ENCODE measurements at regions of chr2 and their contacts with region 1.

Region 1: DNA sequence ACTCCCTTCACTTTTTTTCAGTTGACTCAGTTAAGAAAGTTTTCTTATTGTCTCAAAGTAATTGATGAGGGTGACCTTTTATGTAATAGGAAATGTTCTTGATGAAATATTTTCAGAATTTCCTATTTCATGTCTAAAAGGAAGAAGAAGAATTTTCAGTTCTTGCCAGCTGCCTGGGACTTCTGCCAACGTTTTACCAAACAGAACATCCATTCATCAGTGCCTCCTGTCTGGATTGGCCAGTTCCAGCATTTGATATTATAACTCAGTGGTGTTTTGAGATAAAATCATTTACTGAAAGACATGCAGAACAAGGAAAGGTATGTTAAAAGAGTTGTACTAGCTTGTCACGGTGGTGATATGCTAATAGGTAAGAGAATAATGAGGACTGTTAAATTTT is 104.7 kb upstream of the MYO3B start:
- DNase-seq: peak; percentile 96
- H3K4me3 ChIP-seq: no peak overlapping the region
- H3K27ac ChIP-seq: no peak overlapping the region
- H3K4me1 ChIP-seq: peaks cover 14% of the 10 kb centered on the region
- H3K27me3 ChIP-seq: no peaks in the 10 kb centered on the region
- CTCF ChIP-seq: no peak
- POLR2A ChIP-seq: no peak

Region 2: GRCh38 chr2:169961911-169962310 is 111.4 kb before region 1 on chr2:
- CTCF ChIA-PET with region 1: no interaction called
- POLR2A ChIA-PET with region 1: no interaction called
- dilution Hi-C with region 1: no loop called
- intact Hi-C with region 1: loop called (anchors 5 kb)
- DNase-seq: no peak
- H3K4me3 ChIP-seq: no peak overlapping the region
- H3K27ac ChIP-seq: no peak overlapping the region
- H3K4me1 ChIP-seq: peaks cover 9% of the 10 kb centered on the region
- H3K27me3 ChIP-seq: no peaks in the 10 kb centered on the region
- CTCF ChIP-seq: no peak
- POLR2A ChIP-seq: no peak

Region 3: GRCh38 chr2:170098626-170099312 is 25.5 kb after region 1 on chr2:
- CTCF ChIA-PET with region 1: interaction called, 4 read pairs
- POLR2A ChIA-PET with region 1: no interaction called
- dilution Hi-C with region 1: no loop called
- intact Hi-C with region 1: loop called (anchors 2 kb)
- DNase-seq: peak; percentile 87
- H3K4me3 ChIP-seq: no peak overlapping the region
- H3K27ac ChIP-seq: no peak overlapping the region
- H3K4me1 ChIP-seq: peaks cover 9% of the 10 kb centered on the region
- H3K27me3 ChIP-seq: no peaks in the 10 kb centered on the region
- CTCF ChIP-seq: no peak
- POLR2A ChIP-seq: no peak

Region 4: DNA sequence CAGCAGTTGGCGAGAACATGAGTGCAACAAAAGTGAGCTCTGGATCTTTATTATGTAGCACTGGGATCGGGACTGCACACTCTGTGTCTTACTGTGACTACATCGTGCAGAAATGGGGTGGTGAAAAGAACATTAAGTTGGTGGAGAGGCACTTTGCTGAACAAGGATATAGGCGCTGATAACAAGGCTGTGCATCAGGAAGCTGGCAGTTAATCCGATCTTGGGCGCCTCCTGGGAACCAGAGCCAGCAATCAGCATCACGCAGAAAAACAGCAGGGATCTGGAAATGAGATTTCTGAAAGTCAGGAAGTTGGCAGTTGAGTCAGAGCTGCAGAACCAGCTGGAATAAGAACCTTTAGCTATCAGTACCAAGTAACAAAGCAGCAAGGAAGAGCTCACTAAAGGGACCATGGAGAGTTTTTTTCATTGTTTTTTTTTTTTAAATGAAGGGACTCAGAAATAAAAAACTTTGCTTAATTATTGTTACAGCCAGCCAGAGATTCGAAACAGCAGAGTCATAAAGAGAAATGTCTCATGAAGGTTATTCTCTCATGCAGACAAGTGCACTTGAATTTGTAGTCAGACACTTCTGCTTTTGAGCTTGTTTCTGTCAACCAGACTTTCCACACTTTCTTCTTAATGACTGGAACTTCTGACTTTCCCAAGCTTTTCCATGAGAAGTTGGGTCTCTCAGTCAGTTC is 81.9 kb after region 1 on chr2:
- CTCF ChIA-PET with region 1: interaction called, 10 read pairs
- POLR2A ChIA-PET with region 1: interaction called, 4 read pairs
- dilution Hi-C with region 1: no loop called
- intact Hi-C with region 1: loop called (anchors 5 kb)
- DNase-seq: peak; percentile 95
- H3K4me3 ChIP-seq: peak overlapping the region in 1 of 3 experiments; percentile 8
- H3K27ac ChIP-seq: peak overlapping the region; percentile 69
- H3K4me1 ChIP-seq: peaks cover 28% of the 10 kb centered on the region
- H3K27me3 ChIP-seq: no peaks in the 10 kb centered on the region
- CTCF ChIP-seq: no peak
- POLR2A ChIP-seq: peak; percentile 27

Region 5: GRCh38 chr2:170221317-170222288 is 148.3 kb after region 1 on chr2:
- CTCF ChIA-PET with region 1: no interaction called
- POLR2A ChIA-PET with region 1: no interaction called
- dilution Hi-C with region 1: no loop called
- intact Hi-C with region 1: loop called (anchors 10 kb)
- DNase-seq: peak; percentile 83
- H3K4me3 ChIP-seq: no peak overlapping the region
- H3K27ac ChIP-seq: peak overlapping the region; percentile 56
- H3K4me1 ChIP-seq: peaks cover 13% of the 10 kb centered on the region
- H3K27me3 ChIP-seq: no peaks in the 10 kb centered on the region
- CTCF ChIP-seq: no peak
- POLR2A ChIP-seq: no peak